ENCODE measurements at regions of chr14 and their contacts with region 1.

Region 1: DNA sequence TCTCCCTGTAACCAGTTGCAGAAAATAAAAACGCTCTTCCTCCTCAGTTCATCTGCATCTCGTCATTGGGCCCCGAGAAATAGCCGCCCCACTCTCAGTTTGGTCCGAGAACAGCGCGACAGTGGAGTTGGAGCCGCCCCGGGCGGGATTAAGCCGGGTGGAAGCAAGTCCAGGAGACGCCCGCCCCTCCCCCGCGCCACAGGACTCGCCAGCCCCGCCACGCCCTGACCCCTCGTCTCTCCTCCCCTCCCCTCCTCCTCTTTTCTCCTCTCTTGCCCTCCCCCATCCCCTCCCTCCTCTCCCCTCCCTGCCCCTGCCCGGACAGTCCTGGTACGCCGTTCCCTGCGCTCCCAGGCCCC is 83.7 kb downstream of the TNFAIP2 start:
- DNase-seq: peak; percentile 88 to 98
- H3K4me3 ChIP-seq: peak overlapping the region; percentile 58
- H3K27ac ChIP-seq: peak overlapping the region; percentile 83
- H3K4me1 ChIP-seq: peaks cover 42% of the 10 kb centered on the region
- H3K27me3 ChIP-seq: no peaks in the 10 kb centered on the region
- CTCF ChIP-seq: no peak

Region 2: GRCh38 chr14:101340556-101340955 is 1866.5 kb before region 1 on chr14:
- CTCF ChIA-PET with region 1: no interaction called
- POLR2A ChIA-PET with region 1: no interaction called
- intact Hi-C with region 1: loop called (anchors 5 kb)
- DNase-seq: no peak
- H3K4me3 ChIP-seq: no peak overlapping the region
- H3K27ac ChIP-seq: no peak overlapping the region
- H3K4me1 ChIP-seq: peaks cover 5% of the 10 kb centered on the region; the same call in 1 of the 2 replicates
- H3K27me3 ChIP-seq: no peaks in the 10 kb centered on the region
- CTCF ChIP-seq: no peak

Region 3: DNA sequence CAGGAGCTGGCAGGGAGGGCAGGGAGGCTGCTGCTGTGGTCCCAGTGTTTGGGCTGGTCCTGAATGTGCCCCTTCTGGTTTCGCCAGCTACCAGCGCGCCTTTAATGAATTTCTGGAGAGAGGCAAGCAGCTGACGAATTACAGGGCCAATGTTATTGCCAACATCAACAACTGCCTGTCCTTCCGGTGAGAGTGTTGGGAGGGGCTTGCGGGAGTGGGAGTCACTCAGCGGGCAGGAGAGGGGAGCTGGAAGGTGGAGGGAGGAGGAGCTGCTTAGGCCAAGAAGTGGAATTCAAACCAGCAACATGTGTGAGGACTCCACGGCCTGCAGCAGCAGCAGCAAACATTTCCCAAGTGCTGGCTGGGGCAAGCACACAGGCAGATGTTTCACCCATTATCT is 76.0 kb before region 1 on chr14:
- CTCF ChIA-PET with region 1: no interaction called
- POLR2A ChIA-PET with region 1: interaction called, 8 read pairs
- intact Hi-C with region 1: loop called (anchors 1 kb)
- DNase-seq: peak; percentile 89 to 98
- H3K4me3 ChIP-seq: no peak overlapping the region
- H3K27ac ChIP-seq: peak overlapping the region; percentile 86
- H3K4me1 ChIP-seq: peaks cover 89% of the 10 kb centered on the region
- H3K27me3 ChIP-seq: no peaks in the 10 kb centered on the region
- CTCF ChIP-seq: no peak

Region 4: GRCh38 chr14:103160866-103161391 is 46.1 kb before region 1 on chr14:
- CTCF ChIA-PET with region 1: no interaction called
- POLR2A ChIA-PET with region 1: no interaction called
- intact Hi-C with region 1: loop called (anchors 2 kb)
- DNase-seq: peak; percentile 95 to 100
- H3K4me3 ChIP-seq: no peak overlapping the region
- H3K27ac ChIP-seq: peak overlapping the region; percentile 89
- H3K4me1 ChIP-seq: peaks cover 68% of the 10 kb centered on the region
- H3K27me3 ChIP-seq: no peaks in the 10 kb centered on the region
- CTCF ChIP-seq: no peak

Region 5: GRCh38 chr14:103260620-103261124 is 53.7 kb after region 1 on chr14:
- CTCF ChIA-PET with region 1: interaction called, 3 read pairs
- POLR2A ChIA-PET with region 1: no interaction called
- intact Hi-C with region 1: loop called (anchors 5 kb)
- DNase-seq: peak; percentile 68 to 71
- H3K4me3 ChIP-seq: peak overlapping the region; percentile 58
- H3K27ac ChIP-seq: peak overlapping the region; percentile 80
- H3K4me1 ChIP-seq: peaks cover 47% of the 10 kb centered on the region
- H3K27me3 ChIP-seq: no peaks in the 10 kb centered on the region
- CTCF ChIP-seq: no peak

Region 6: GRCh38 chr14:103628684-103629502 is 421.9 kb after region 1 on chr14 and contains the start of gene KLC1:
- CTCF ChIA-PET with region 1: no interaction called
- POLR2A ChIA-PET with region 1: no interaction called
- intact Hi-C with region 1: loop called (anchors 2 kb)
- DNase-seq: peak; percentile 57 to 90
- H3K4me3 ChIP-seq: peak within 1 kb of the TSS; percentile 81
- H3K27ac ChIP-seq: peak within 1 kb of the TSS; percentile 92
- H3K4me1 ChIP-seq: peaks cover 50% of the 10 kb centered on the region
- H3K27me3 ChIP-seq: no peaks in the 10 kb centered on the region
- CTCF ChIP-seq: no peak
- total RNA-seq, gene KLC1: 254 and 331 TPM in 2 replicates

Measured in PC-9 (cell line).